CD14-positive monocyte (primary cell): ENCODE measurements at regions of chr6 and their contacts with region 1.

Region 1: DNA sequence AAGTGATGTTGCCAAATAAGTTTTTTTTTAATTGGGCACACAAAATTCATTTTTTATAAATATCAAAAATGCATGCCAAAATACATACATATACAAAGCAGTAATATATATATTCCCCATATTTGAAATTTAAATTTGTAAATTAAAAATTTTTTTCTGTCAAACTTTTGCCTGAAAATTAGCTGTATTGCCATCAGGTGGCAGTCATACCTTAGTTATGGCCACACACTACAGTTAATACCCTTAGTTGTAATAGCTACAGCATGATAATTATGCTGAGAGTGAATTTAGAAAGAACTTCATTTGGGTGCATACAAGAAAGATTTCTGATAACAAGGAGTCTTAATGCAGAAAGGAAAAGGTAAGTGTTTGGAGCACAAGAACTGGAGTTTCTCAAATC is 46.2 kb upstream of the SDHAF4 start:
- DNase-seq: peak; percentile 1 to 24 (median 8)
- H3K4me3 ChIP-seq: no peak overlapping the region
- H3K4me3 Mint-ChIP-seq: no peak overlapping the region
- H3K27ac ChIP-seq: no peak overlapping the region
- H3K27ac Mint-ChIP-seq: no peak overlapping the region
- H3K4me1 ChIP-seq: no peaks in the 10 kb centered on the region
- H3K4me1 Mint-ChIP-seq: no peaks in the 10 kb centered on the region
- H3K27me3 ChIP-seq: no peaks in the 10 kb centered on the region
- H3K27me3 Mint-ChIP-seq: peaks cover 0 to 2% (median 0%) of the 10 kb centered on the region in 3 donors
- CTCF ChIP-seq: peak; percentile 58

Region 2: GRCh38 chr6:70028926-70029325 is 491.6 kb before region 1 on chr6:
- intact Hi-C with region 1: no loop called
- DNase-seq: no peak
- H3K4me3 ChIP-seq: no peak overlapping the region
- H3K4me3 Mint-ChIP-seq: no peak overlapping the region
- H3K27ac ChIP-seq: no peak overlapping the region
- H3K27ac Mint-ChIP-seq: no peak overlapping the region
- H3K4me1 ChIP-seq: no peaks in the 10 kb centered on the region
- H3K4me1 Mint-ChIP-seq: no peaks in the 10 kb centered on the region
- H3K27me3 ChIP-seq: no peaks in the 10 kb centered on the region
- H3K27me3 Mint-ChIP-seq: no peaks in the 10 kb centered on the region
- CTCF ChIP-seq: no peak

Region 3: DNA sequence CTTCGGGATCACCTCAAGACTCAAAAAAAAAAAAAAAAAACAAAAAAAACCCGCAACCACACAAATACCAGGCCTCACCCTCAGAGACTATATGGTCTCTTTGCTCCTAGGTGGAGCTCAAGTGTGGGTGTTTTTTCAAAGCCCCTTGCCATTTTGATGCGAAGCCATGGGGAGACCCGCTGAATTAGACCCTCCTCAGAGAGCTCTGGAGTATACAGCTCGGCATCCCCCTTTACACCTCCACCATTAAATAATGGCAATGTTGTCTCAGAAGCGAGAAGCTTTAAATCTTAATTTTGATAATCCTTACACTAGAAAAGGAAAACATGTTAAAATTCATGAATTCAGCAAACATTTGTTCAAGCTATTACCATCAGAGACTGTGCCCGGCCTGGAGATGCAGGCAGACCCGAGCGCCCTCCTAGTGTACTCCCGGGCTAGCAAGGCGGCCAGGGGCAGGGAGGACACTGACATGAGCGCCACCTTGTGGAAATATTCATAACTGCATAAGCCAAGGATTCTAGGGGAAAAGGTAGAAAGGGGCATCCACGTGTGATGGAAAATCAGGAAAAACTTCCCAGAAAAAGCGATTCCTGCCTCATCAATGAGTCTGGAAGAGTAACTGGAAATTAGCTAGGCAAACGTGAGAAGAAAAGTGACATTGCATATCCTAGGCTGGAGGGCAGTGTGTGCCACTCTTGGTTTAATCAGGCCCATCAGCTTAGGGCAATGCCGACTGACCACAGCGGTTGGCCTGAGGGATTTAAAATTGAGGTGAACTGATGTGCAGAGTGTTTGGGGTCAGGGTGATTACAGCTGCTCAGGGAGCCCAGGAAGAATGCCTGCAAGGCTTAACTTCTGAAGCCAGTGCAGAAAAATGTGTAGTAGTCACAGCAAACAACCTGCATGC is 363.8 kb after region 1 on chr6:
- intact Hi-C with region 1: loop called (anchors 2 to 10 kb)
- DNase-seq: peak; percentile 17 to 41 (median 33)
- H3K4me3 ChIP-seq: no peak overlapping the region
- H3K4me3 Mint-ChIP-seq: no peak overlapping the region
- H3K27ac ChIP-seq: no peak overlapping the region
- H3K27ac Mint-ChIP-seq: no peak overlapping the region
- H3K4me1 ChIP-seq: no peaks in the 10 kb centered on the region
- H3K4me1 Mint-ChIP-seq: no peaks in the 10 kb centered on the region
- H3K27me3 ChIP-seq: no peaks in the 10 kb centered on the region
- H3K27me3 Mint-ChIP-seq: peaks cover 2 to 5% (median 5%) of the 10 kb centered on the region in 3 donors
- CTCF ChIP-seq: peak; percentile 88